ENCODE measurements at regions of chr15 and their contacts with region 1.

Region 1: DNA sequence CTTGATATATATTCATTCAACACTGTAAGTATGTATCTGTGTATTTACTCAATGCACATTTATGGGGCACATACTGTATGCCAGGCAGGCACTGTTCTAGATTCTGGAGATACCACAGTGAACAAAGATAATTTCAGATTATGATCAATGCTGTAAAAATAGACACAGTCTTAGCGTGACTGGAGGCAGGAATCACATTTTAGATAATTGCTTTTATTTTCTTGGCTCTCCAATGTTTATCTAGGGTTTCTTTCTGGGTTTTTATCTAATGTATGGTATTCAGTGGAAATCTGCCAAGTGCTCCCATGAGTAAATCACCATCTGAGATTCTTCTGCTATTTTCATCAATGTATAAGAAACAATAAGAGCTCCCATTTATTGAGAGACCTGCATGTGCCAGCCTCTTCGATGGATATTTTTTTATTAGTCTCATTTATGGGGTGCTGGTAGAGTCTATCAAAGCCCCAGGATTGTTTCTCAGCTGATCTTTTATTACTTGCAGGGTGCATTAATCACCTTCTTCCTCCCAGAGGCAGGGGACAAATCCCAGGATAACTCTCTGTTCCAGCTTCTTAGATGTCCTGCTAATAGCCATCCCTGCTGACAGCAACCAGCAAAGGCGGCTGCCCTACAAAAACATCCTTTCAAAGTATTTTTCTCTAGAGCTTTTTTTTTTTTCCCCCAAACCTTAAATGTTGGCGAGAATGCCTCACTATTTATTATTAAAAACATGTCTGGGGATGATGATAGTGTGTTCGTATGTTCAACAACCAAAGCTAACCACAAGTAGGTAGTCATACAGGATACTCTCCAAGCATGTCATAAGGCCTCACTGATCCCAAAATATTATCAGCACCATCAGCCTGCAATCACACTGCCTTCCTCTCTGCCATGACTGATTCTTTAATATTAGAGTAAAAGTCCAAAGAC is 331.0 kb upstream of the RASGRP1 start:
- DNase-seq: no peak
- ATAC-seq: no peak
- H3K4me3 ChIP-seq: no peak overlapping the region
- H3K4me3 Mint-ChIP-seq: no peak overlapping the region
- H3K27ac ChIP-seq: no peak overlapping the region
- H3K27ac Mint-ChIP-seq: no peak overlapping the region
- H3K4me1 ChIP-seq: no peaks in the 10 kb centered on the region
- H3K4me1 Mint-ChIP-seq: no peaks in the 10 kb centered on the region
- H3K27me3 ChIP-seq: no peaks in the 10 kb centered on the region
- H3K27me3 Mint-ChIP-seq: peaks cover 5 to 18% of the 10 kb centered on the region in 2 donors

Region 2: GRCh38 chr15:39022532-39023305 is 127.1 kb after region 1 on chr15:
- CTCF ChIA-PET with region 1: interaction called in 1 of 2 experiments, 14 read pairs
- POLR2A ChIA-PET with region 1: no interaction called
- DNase-seq: no peak
- ATAC-seq: no peak
- H3K4me3 ChIP-seq: no peak overlapping the region
- H3K4me3 Mint-ChIP-seq: no peak overlapping the region
- H3K27ac ChIP-seq: no peak overlapping the region
- H3K27ac Mint-ChIP-seq: no peak overlapping the region
- H3K4me1 ChIP-seq: no peaks in the 10 kb centered on the region
- H3K4me1 Mint-ChIP-seq: no peaks in the 10 kb centered on the region
- H3K27me3 ChIP-seq: peaks cover 0 to 3% of the 10 kb centered on the region in 2 experiments
- H3K27me3 Mint-ChIP-seq: peaks cover 5 to 12% of the 10 kb centered on the region in 2 donors

Measured in T-cell (primary cell).